AG04450 (cell line): ENCODE measurements at regions of chr2 and their contacts with region 1.

Region 1: GRCh38 chr2:168118733-168119514 is 128.5 kb downstream of the STK39 start:
- DNase-seq: peak; percentile 54
- H3K4me3 ChIP-seq: no peak overlapping the region
- H3K27ac ChIP-seq: no peak overlapping the region
- H3K27me3 ChIP-seq: no peaks in the 10 kb centered on the region
- CTCF ChIP-seq: peak; percentile 70

Region 2: GRCh38 chr2:166882851-166883250 is 1236.1 kb before region 1 on chr2:
- CTCF ChIA-PET with region 1: interaction called, 11 read pairs
- POLR2A ChIA-PET with region 1: no interaction called
- DNase-seq: no peak
- H3K4me3 ChIP-seq: no peak overlapping the region
- H3K27ac ChIP-seq: no peak overlapping the region
- H3K27me3 ChIP-seq: no peaks in the 10 kb centered on the region
- CTCF ChIP-seq: no peak

Region 3: GRCh38 chr2:167509586-167509985 is 609.3 kb before region 1 on chr2:
- CTCF ChIA-PET with region 1: interaction called, 10 read pairs
- POLR2A ChIA-PET with region 1: no interaction called
- DNase-seq: peak; percentile 47
- H3K4me3 ChIP-seq: no peak overlapping the region
- H3K27ac ChIP-seq: no peak overlapping the region
- H3K27me3 ChIP-seq: no peaks in the 10 kb centered on the region
- CTCF ChIP-seq: no peak

Region 4: DNA sequence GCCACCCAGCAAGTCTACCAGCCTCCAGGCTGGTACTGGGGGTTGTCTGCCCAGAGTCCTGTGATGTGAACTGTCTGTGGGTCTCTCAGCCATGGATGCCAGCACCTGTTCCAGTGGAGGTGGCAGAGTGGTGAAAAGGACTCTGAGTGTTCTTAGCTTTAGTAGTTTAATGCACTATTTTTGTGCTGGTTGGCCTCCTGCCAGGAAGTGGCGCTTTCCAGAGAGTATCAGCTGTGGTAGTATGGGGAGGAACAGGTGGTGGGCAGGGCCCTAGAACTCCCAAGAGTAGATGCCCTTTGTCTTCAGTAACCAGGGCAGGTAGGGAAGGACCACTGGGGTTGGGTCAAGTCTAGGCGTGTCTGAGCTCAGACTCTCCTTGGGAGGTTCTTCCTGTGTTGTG is 228.2 kb before region 1 on chr2:
- CTCF ChIA-PET with region 1: interaction called, 17 read pairs
- POLR2A ChIA-PET with region 1: no interaction called
- DNase-seq: no peak
- H3K4me3 ChIP-seq: no peak overlapping the region
- H3K27ac ChIP-seq: no peak overlapping the region
- H3K27me3 ChIP-seq: no peaks in the 10 kb centered on the region
- CTCF ChIP-seq: no peak

Region 5: DNA sequence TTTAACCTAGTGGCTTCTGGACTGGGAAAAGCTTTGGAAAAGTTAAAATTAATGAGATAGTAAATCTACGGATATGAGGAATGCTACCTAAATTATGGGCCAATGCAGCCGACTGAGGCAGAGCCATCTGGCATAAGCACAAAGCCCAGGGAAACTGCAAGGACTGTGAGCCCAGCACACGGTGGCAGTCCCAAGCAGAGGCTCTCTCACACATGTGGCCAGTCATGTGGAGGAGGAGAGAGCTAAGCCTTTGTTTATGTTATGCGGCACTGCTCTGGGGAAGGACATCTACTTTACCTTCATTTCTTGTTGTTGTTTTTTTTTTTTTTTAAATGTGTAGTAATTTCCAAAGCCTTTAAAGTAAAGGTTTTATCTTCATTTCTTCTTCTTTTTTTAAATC is 138.5 kb before region 1 on chr2:
- CTCF ChIA-PET with region 1: interaction called, 60 read pairs
- POLR2A ChIA-PET with region 1: no interaction called
- DNase-seq: no peak
- H3K4me3 ChIP-seq: no peak overlapping the region
- H3K27ac ChIP-seq: no peak overlapping the region
- H3K27me3 ChIP-seq: no peaks in the 10 kb centered on the region
- CTCF ChIP-seq: no peak

Region 6: GRCh38 chr2:168084327-168084726 is 34.6 kb before region 1 on chr2:
- CTCF ChIA-PET with region 1: interaction called, 19 read pairs
- POLR2A ChIA-PET with region 1: no interaction called
- DNase-seq: no peak
- H3K4me3 ChIP-seq: no peak overlapping the region
- H3K27ac ChIP-seq: no peak overlapping the region
- H3K27me3 ChIP-seq: no peaks in the 10 kb centered on the region
- CTCF ChIP-seq: no peak

Region 7: DNA sequence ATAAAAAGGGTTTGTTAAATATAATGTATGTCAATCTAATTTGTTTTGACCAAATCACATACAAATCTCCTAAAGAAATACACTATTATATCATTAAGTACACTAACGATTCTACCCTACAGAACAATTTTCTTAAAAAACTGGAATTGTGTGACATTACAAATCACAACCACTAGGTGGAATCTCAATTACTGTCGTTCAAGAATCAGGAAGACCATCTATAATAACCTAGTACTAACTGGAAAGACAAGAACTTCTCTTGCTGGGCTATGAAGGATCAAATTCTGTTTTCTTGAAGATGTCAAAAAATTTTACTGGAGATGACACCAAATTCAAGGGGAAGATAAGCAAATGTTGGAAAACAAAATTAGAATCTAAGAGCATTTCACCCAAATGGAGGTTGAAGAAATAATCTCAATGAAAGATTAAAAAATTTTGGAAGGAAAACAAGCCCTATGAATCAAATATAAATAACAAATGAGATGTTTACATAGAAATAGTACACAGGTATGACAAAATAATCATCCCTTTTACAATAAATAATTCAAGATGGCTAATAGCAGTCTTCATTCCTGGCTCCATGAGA is 17.6 kb after region 1 on chr2:
- CTCF ChIA-PET with region 1: interaction called, 156 read pairs
- POLR2A ChIA-PET with region 1: no interaction called
- DNase-seq: no peak
- H3K4me3 ChIP-seq: no peak overlapping the region
- H3K27ac ChIP-seq: no peak overlapping the region
- H3K27me3 ChIP-seq: no peaks in the 10 kb centered on the region
- CTCF ChIP-seq: peak; percentile 55